ENCODE measurements at regions of chr7 and their contacts with region 1.

Region 1: GRCh38 chr7:77808517-77808916 is 9.9 kb downstream of the PHTF2 start:
- DNase-seq: no peak
- H3K4me3 ChIP-seq: no peak overlapping the region
- H3K27ac ChIP-seq: no peak overlapping the region
- H3K4me1 ChIP-seq: peaks cover 10% of the 10 kb centered on the region
- H3K27me3 ChIP-seq: no peaks in the 10 kb centered on the region
- CTCF ChIP-seq: no peak

Region 2: DNA sequence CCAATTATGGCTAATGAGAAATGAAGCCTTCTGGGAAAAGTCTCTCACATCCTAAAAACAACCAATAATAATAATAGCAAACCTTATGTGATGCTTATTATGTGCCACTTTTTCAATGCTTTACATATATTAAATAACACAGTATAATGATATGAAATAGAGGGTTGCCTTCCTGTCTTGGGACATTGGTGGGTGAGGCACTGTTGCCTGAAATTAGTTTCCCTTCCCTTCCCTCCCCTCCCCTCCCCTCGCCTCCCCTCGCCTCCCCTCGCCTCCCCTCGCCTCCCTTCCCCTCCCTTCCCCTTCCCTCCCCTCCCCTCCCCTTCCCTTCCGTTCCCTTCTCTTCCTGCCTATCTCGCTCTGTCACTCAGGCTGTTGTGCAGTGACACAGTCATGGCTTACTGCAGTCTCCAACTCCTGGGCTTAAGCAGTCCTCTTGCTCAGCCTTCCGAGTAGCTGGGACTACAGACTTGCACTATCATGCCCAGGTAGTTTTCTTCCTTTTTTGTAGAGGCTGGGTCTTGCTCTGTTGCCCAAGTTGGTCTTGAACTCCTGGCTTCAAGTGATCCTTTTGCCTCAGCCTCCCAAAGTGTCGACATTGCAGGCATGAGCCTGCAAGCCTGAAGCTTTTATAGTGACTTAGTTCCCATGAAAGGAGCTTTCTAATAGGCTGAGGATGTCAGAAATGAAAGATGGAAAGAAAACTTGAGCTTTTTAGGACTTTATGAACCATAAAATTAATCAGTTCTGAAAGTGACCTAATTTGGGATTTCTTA is 38.0 kb after region 1 on chr7:
- dilution Hi-C with region 1: loop called (anchors 5 kb)
- DNase-seq: no peak
- H3K4me3 ChIP-seq: no peak overlapping the region
- H3K27ac ChIP-seq: no peak overlapping the region
- H3K4me1 ChIP-seq: no peaks in the 10 kb centered on the region
- H3K27me3 ChIP-seq: no peaks in the 10 kb centered on the region
- CTCF ChIP-seq: no peak

Measured in keratinocyte (primary cell).